ENCODE measurements at regions of chr1 and their contacts with region 1.

Region 1: DNA sequence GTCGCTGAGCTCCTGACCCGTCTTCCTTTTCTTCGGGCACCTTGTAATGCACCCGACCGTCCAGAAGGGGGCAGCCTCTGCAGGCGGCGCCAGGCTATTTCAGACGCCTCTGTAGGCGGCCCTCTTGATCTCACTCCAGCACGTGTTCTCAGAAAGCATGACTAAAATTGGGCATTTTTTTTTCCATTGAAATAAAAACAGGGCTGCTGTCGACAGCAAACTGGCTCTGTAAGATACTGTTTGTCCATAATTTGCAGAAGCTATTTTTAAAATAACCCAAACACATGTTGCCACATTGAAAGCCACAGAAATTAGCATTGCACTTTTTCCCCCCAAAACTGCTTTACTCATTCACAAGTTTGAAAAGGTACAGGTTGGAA is 78.0 kb downstream of the STUM start:
- DNase-seq: peak; percentile 85
- ATAC-seq: peak; percentile 97
- H3K4me3 ChIP-seq: peak overlapping the region in 4 of 5 experiments; percentile 9 to 46 (median 32)
- H3K4me3 Mint-ChIP-seq: peak overlapping the region; percentile 56
- H3K27ac ChIP-seq: no peak overlapping the region
- H3K27ac Mint-ChIP-seq: peak overlapping the region; percentile 21
- H3K4me1 ChIP-seq: peaks cover 20 to 21% of the 10 kb centered on the region in 2 donors
- H3K4me1 Mint-ChIP-seq: peaks cover 37% of the 10 kb centered on the region
- H3K27me3 ChIP-seq: no peaks in the 10 kb centered on the region
- H3K27me3 Mint-ChIP-seq: no peaks in the 10 kb centered on the region
- CTCF ChIP-seq: peak; percentile 95

Region 2: DNA sequence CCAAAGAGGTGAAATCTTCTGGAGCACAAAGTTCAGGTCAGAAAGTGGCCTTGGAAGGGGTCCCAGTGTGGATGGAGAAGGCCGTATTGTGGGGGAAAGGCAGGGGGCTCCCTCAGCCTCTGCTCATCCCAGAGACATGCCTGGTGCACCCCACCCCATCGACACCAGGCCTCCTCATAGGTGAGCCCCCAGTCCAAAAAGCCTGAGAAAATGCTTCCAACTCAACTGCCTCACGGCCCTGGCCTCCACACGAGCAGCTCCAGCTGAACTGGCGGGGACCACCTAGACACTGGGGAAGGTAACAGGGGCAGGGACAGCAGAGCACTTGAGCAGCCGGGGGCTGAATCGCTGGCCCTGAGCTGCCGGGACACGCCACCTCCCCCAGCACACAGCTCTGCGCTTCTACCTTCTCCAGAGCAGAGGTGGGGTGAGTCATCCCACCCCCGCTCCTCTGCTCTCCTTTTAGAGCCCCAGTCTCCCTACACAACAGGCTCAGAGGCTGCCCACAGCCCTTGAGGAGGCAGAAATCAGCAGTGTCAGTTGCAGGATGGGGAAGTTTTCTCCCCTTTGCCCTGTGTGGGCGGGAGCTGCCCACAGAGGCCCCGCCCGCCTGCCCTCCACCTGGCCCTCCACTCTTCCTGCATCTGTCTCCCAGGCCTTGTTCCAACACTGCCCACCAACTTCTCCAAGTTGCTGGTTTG is 16.5 kb after region 1 on chr1:
- CTCF ChIA-PET with region 1: interaction called, 16 read pairs
- POLR2A ChIA-PET with region 1: no interaction called
- intact Hi-C with region 1: no loop called
- DNase-seq: peak; percentile 62
- ATAC-seq: peak; percentile 48
- H3K4me3 ChIP-seq: no peak overlapping the region
- H3K4me3 Mint-ChIP-seq: peak overlapping the region; percentile 81
- H3K27ac ChIP-seq: peak overlapping the region; percentile 62 to 68
- H3K27ac Mint-ChIP-seq: peak overlapping the region; percentile 91
- H3K4me1 ChIP-seq: peaks cover 57 to 70% of the 10 kb centered on the region in 2 donors
- H3K4me1 Mint-ChIP-seq: peaks cover 71% of the 10 kb centered on the region
- H3K27me3 ChIP-seq: no peaks in the 10 kb centered on the region
- H3K27me3 Mint-ChIP-seq: no peaks in the 10 kb centered on the region
- CTCF ChIP-seq: no peak

Region 3: DNA sequence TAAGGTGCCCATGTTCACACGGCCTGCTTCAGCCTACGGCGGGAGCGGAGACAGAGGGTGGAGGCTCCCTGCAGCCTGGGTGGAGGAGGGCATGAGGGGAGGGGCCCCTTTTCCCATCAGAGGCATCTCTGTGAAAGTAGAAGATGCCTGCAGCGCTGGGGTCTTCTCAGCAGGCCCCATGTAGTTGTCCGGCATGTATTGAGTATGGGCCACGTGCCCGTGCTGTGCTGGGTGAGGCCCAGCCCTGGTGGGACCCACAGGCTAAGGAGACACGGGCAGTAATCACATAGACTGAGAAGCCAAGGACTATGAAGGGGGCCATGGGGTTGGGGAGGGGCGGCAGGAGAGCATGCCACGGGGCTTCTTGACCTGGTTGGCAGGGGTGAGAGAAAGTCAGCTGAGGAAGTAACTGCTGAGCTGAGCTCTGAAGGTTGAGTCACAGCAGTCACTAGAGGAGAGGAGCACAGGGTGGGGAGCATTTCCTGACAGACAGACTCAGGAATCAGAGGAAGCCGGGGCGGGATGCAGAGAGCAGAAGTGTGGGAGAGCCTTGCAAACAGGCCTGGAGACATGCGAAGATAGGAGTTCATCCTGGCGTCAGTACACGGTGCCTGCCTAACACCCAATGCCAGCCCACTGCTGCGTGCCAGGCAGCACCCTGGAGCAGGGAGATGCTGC is 265.4 kb after region 1 on chr1:
- CTCF ChIA-PET with region 1: no interaction called
- POLR2A ChIA-PET with region 1: no interaction called
- intact Hi-C with region 1: no loop called
- DNase-seq: no peak
- ATAC-seq: no peak
- H3K4me3 ChIP-seq: no peak overlapping the region
- H3K4me3 Mint-ChIP-seq: no peak overlapping the region
- H3K27ac ChIP-seq: no peak overlapping the region
- H3K27ac Mint-ChIP-seq: no peak overlapping the region
- H3K4me1 ChIP-seq: peaks cover 0 to under 1% of the 10 kb centered on the region in 2 donors
- H3K4me1 Mint-ChIP-seq: no peaks in the 10 kb centered on the region
- H3K27me3 ChIP-seq: no peaks in the 10 kb centered on the region
- H3K27me3 Mint-ChIP-seq: no peaks in the 10 kb centered on the region
- CTCF ChIP-seq: no peak